Common myeloid progenitor, CD34-positive (primary cell): ENCODE measurements at regions of chr2 and their contacts with region 1.

Region 1: DNA sequence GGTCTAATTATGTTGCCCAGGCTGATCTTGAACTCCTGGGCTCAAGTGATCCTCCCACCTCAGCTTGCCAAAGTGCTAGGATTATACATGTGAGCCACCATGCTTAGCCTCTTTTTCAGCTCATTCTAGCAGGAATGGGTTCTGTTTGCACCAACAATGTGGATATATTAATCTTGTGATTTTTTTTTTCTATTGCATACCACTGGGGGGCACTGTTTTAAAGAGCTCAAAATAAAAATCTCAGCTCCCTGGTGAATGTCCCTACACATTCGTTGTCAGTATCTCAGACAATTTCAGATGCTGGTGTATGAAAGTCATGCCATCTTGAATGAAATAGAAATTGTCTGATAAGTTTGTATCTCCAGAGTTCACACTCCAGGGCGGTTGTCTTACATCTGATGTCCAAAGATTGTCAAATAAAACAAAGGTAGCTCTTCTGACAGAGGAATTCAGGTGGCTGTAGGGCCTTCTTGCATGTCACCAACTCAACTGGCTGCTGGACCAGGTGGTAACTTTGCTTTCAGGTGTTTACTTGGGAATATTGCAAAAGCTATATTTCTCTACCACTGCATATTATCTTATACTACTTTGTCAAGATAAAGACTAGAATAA is 3.1 kb upstream of the MATN3 start:
- DNase-seq: peak; percentile 54 to 74 (median 70)
- H3K4me3 ChIP-seq: no peak overlapping the region
- H3K27ac ChIP-seq: no peak overlapping the region
- H3K4me1 ChIP-seq: peaks cover 0 to 14% (median 12%) of the 10 kb centered on the region in 4 experiments
- H3K27me3 ChIP-seq: peaks cover 2 to 39% (median 21%) of the 10 kb centered on the region in 5 experiments

Region 2: GRCh38 chr2:19868705-19869580 is 146.6 kb before region 1 on chr2:
- CTCF ChIA-PET with region 1: no interaction called
- POLR2A ChIA-PET with region 1: no interaction called
- DNase-seq: peak; percentile 19 to 65 (median 52)
- H3K4me3 ChIP-seq: peak overlapping the region; percentile 56 to 81 (median 64)
- H3K27ac ChIP-seq: no peak overlapping the region
- H3K4me1 ChIP-seq: peaks cover 0 to 12% (median 12%) of the 10 kb centered on the region in 4 experiments
- H3K27me3 ChIP-seq: peaks cover 0 to 6% (median 5%) of the 10 kb centered on the region in 5 experiments

Region 3: DNA sequence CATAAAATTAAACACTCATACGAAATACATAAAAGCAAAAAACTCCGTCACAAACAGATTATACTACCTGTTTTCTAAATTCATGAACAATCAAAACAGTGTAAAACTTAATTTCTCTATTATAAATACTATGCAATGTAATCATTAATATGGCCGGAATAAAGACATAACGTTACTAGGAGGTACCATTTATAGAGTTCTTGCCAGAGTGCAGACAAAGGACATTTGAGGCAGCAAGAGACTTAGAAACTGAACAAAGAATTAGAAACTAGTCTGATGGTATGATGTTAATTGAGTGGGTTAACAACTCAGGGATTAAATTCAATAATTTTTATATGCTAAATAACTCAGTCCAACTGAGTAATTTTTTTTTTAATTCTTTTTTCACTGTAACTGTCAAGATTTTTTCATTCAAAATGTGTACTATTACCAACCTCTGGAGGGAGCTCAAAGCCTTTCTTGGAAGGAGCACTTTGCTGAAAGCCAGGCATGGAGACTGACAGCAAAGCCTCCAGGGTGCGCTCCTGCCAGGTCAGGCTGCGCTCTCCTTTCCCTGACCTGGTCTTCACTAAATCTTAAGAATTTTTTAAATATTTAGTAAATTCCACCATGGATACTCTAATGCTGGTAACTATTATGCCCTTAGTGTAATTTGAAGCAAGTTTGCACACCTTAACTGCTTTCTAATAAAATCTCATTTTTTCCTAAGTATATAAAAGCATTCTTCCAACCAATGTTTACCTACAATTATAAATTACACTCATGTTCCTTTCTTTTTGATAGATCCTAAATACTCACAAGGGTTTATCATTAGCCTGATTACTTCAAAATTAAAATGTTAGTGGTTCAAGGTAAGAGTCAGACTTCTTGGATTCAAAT is 59.8 kb before region 1 on chr2:
- CTCF ChIA-PET with region 1: interaction called, 25 read pairs
- POLR2A ChIA-PET with region 1: no interaction called
- DNase-seq: peak; percentile 80 to 87 (median 83)
- H3K4me3 ChIP-seq: no peak overlapping the region
- H3K27ac ChIP-seq: no peak overlapping the region
- H3K4me1 ChIP-seq: no peaks in the 10 kb centered on the region
- H3K27me3 ChIP-seq: no peaks in the 10 kb centered on the region

Region 4: DNA sequence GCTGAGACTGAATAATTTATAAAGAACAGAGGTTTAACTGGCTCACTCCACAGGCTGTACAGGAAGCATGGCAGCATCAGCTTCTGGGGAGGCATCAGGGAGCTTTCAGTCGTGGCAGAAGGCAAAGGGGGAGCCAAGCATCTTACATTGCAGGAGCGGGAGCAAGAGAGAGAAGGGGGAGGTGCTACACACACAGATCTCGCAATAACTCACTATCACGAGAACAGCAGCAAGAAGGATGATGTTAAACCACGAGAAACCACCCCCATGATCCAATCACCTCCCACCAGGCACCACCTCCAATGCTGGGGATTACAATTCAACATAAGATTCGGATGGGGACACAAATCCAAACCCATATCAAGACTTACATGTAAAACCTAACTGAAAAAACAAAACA is 14.6 kb after region 1 on chr2:
- CTCF ChIA-PET with region 1: interaction called, 14 read pairs
- POLR2A ChIA-PET with region 1: no interaction called
- DNase-seq: no peak
- H3K4me3 ChIP-seq: no peak overlapping the region
- H3K27ac ChIP-seq: no peak overlapping the region
- H3K4me1 ChIP-seq: no peaks in the 10 kb centered on the region
- H3K27me3 ChIP-seq: no peaks in the 10 kb centered on the region

Region 5: DNA sequence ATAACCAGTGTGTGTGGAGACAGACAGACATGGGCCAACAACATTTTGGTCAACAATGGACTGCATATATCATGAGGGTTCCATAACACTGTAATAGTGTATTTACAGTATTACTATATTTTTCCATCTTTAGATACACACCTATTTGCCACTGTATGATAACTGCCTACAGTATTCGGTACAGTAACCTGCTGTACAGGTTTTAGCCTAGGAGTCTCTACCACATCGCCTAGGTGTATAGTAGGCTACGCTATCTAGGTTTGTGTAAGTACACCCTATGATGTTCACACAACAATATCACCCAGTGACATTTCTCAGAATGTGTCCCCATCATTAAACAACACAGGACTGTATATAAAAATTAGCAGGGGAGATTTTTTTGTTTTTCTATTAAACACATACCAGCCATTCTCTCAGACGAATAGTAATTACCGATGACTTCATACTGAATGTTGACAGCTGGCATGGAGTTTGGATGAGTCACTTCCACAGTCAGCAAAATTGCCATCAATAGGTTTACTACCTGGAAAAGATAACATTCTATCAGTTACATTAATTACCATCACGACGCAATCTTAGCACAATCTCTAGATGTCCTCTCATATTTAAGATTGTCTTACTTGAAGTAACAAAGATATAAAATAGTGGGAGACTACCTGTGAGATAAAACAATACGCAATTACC is 25.1 kb after region 1 on chr2:
- CTCF ChIA-PET with region 1: interaction called, 18 read pairs
- POLR2A ChIA-PET with region 1: no interaction called
- DNase-seq: peak in 1 of 3 donors; percentile 24
- H3K4me3 ChIP-seq: no peak overlapping the region
- H3K27ac ChIP-seq: no peak overlapping the region
- H3K4me1 ChIP-seq: peaks cover 0 to 11% (median 5%) of the 10 kb centered on the region in 4 experiments
- H3K27me3 ChIP-seq: no peaks in the 10 kb centered on the region

Region 6: GRCh38 chr2:20051532-20052228 is 36.1 kb after region 1 on chr2 and contains the start of gene LAPTM4A:
- CTCF ChIA-PET with region 1: interaction called, 11 read pairs
- POLR2A ChIA-PET with region 1: interaction called, 3 read pairs
- DNase-seq: peak; percentile 100
- H3K4me3 ChIP-seq: peak within 1 kb of the TSS; percentile 78 to 100 (median 90)
- H3K27ac ChIP-seq: peak within 1 kb of the TSS; percentile 97
- H3K4me1 ChIP-seq: peaks cover 18 to 40% (median 33%) of the 10 kb centered on the region in 4 experiments
- H3K27me3 ChIP-seq: peaks cover 0 to 4% (median 2%) of the 10 kb centered on the region in 5 experiments

Region 7: DNA sequence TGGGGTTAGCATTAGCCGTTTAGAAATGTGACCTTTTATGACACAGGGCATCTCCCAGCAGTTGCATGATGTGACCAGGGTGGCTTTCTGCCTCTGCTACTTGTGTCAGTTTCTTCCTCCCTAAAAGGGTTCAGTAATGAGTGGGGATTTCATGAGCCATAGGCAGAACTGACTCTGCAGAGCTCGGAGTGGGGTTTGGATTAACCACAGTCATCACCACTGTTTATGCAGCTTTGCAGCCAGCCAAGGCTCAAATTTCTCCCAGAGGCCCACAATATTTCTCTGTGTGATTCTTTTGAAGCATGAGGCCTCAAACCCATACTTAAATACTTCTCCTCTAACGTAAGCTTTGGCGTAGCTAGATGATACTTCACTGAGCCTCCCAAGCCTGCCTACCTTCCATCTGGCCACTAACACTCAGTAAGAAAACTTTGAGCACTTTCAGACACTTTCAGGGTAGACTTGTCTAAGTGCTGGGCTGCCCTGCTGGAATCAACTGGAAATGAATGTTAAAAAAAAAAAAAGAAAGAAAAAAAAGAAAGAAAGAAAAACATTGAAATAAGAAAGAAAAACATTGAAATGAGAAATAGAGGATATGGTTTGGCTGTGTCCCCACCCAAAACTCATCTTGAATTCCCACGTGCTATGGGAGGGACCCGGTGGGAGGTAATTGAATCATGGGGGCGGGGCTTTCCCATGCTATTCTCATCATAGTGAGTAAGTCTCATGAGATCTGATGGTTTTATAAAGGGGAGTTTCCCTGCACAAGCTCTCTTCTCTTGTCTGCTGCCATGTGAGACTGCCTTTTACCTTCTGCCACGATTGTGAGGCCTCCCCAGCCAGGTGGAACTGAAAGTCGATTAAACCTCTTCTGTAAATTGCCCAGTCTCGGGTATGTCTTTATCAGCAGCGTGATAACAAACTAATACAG is 47.3 kb after region 1 on chr2:
- CTCF ChIA-PET with region 1: interaction called, 13 read pairs
- POLR2A ChIA-PET with region 1: no interaction called
- DNase-seq: no peak
- H3K4me3 ChIP-seq: no peak overlapping the region
- H3K27ac ChIP-seq: no peak overlapping the region
- H3K4me1 ChIP-seq: no peaks in the 10 kb centered on the region
- H3K27me3 ChIP-seq: peaks cover 0 to 4% (median 0%) of the 10 kb centered on the region in 5 experiments

Region 8: GRCh38 chr2:20097879-20098714 is 82.5 kb after region 1 on chr2:
- CTCF ChIA-PET with region 1: interaction called, 42 read pairs
- POLR2A ChIA-PET with region 1: no interaction called
- DNase-seq: peak; percentile 87 to 94 (median 93)
- H3K4me3 ChIP-seq: no peak overlapping the region
- H3K27ac ChIP-seq: no peak overlapping the region
- H3K4me1 ChIP-seq: no peaks in the 10 kb centered on the region
- H3K27me3 ChIP-seq: no peaks in the 10 kb centered on the region

Region 9: GRCh38 chr2:20186078-20186854 is 170.7 kb after region 1 on chr2:
- CTCF ChIA-PET with region 1: no interaction called
- POLR2A ChIA-PET with region 1: no interaction called
- DNase-seq: peak; percentile 54 to 88 (median 76)
- H3K4me3 ChIP-seq: peak overlapping the region in 1 of 7 experiments; percentile 33
- H3K27ac ChIP-seq: peak overlapping the region in 1 of 2 experiments; percentile 59
- H3K4me1 ChIP-seq: peaks cover 0 to 26% (median 14%) of the 10 kb centered on the region in 4 experiments
- H3K27me3 ChIP-seq: no peaks in the 10 kb centered on the region